ENCODE measurements at regions of chr10 and their contacts with region 1.

Region 1: DNA sequence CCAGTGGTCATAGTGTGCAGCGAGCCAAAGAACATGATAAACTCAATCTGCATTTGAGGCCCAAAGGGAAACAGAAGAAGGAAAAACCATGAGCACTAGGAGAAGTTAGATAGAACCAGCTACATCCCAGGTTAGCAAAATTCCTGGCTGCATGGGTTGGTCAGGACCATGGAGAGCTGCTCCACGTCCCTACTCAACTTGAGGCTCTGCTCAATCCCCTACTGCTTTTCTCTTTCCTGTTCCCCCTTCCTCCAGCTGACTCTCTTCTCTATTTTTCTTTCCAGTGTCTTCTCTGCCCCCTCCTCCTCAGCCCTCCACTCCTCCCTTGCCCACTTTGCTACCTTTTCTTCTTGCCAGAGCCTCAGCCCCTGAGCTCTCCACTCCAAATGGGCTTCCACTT is 21.9 kb upstream of the VSIR start:
- DNase-seq: peak; percentile 31
- H3K4me3 ChIP-seq: no peak overlapping the region
- H3K27ac ChIP-seq: no peak overlapping the region
- H3K4me1 ChIP-seq: peaks cover 20% of the 10 kb centered on the region
- CTCF ChIP-seq: no peak

Region 2: DNA sequence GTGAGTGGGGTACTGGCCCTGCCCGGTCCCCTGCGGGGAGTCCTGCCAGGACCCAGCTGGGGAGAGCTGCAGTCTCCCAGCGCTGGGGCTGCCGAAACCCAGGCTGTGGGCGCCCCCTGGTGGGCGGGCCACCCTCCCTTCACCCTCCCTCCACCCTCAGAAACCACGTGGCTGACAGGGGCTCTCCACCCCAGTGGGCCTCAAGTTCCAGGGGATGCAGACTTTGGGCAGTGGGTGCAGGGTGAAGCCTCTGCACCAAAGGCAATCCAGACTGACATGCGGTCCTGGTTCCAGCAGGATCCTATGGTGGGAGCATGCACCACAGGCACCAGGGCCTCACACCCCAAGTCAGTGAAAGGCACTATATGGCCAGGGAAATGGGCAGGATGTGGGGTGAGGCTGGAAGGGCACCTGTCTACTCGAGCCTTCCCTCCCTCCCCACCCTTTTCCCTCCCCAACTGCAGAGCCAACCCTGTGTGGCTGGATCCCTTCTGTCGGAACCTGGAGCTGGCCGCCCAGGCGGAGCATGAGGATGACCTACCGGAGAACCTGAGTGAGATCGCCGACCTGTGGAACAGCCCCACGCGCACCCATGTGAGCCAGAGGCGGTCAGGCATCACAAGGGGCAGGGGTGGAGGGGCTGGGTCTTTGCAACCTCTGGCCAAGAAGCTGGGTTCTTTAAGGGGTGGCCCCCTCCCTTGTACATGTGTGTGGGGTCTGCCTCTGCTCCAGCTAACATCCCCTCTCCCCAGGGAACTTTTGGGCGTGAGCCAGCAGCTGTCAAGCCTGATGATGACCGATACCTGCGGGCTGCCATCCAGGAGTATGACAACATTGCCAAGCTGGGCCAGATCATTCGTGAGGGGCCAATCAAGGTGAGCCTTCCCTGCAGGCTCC is 17.0 kb after region 1 on chr10:
- CTCF ChIA-PET with region 1: no interaction called
- POLR2A ChIA-PET with region 1: no interaction called
- intact Hi-C with region 1: loop called (anchors 2 kb)
- DNase-seq: peak; percentile 80
- H3K4me3 ChIP-seq: no peak overlapping the region
- H3K27ac ChIP-seq: no peak overlapping the region
- H3K4me1 ChIP-seq: peaks cover 6% of the 10 kb centered on the region
- CTCF ChIP-seq: peak; percentile 97

Region 3: DNA sequence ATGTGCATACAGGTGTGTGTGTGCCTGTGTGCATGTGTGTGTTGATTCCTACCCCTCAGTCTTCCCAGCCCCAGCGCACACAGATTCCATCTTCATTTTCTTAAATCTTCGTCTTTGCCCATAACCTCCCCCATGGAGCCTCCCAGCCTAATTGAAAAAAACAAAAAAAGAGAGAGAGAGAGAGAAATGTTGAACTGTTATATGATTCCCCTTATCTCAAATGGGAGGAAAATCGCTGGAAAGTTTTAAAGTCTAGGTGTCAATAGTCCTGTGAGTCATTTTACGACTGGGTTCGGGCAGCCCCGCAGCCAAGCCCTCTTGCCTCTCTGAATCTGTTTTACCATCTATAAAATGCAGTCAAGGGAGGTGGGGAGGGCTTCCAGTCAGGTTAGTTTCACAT is 232.2 kb after region 1 on chr10:
- CTCF ChIA-PET with region 1: interaction called, 12 read pairs
- POLR2A ChIA-PET with region 1: no interaction called
- intact Hi-C with region 1: no loop called
- DNase-seq: no peak
- H3K4me3 ChIP-seq: no peak overlapping the region
- H3K27ac ChIP-seq: no peak overlapping the region
- H3K4me1 ChIP-seq: no peaks in the 10 kb centered on the region
- CTCF ChIP-seq: no peak

Region 4: DNA sequence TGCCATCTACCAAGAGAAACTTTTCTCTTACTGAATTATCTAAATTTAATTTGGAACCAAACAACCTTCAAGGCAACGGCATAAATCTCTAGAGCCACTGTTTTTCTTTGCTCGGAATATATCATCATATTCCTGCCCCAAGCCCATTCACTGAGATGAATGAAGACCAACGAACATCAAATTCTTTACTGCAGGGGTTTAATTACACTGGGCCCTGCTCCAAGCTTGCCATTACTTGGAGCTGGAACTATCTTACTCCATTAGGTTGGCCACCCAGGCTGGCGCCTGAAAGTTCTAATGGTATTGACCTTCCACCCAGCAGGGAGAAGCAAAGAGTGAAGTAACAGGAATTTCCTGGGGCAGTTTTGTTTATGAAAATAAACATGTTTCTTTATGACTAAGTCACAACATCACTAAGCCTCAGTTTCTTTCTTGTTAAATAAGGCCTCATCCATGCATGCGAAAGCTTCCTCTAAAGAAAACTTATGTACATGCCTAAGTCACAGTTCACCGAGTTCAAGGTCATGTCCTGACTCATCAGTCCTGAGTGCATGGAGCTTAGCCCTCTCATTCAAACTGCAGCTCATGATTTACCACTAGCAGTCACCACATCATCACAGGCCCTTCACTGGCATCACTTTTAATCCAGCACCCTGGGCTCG is 378.5 kb after region 1 on chr10:
- CTCF ChIA-PET with region 1: no interaction called
- POLR2A ChIA-PET with region 1: no interaction called
- intact Hi-C with region 1: no loop called
- DNase-seq: peak; percentile 9
- H3K4me3 ChIP-seq: no peak overlapping the region
- H3K27ac ChIP-seq: no peak overlapping the region
- H3K4me1 ChIP-seq: peaks cover 19% of the 10 kb centered on the region
- CTCF ChIP-seq: no peak